Caco-2 (cell line): ENCODE measurements at regions of chr5 and their contacts with region 1.

Region 1: DNA sequence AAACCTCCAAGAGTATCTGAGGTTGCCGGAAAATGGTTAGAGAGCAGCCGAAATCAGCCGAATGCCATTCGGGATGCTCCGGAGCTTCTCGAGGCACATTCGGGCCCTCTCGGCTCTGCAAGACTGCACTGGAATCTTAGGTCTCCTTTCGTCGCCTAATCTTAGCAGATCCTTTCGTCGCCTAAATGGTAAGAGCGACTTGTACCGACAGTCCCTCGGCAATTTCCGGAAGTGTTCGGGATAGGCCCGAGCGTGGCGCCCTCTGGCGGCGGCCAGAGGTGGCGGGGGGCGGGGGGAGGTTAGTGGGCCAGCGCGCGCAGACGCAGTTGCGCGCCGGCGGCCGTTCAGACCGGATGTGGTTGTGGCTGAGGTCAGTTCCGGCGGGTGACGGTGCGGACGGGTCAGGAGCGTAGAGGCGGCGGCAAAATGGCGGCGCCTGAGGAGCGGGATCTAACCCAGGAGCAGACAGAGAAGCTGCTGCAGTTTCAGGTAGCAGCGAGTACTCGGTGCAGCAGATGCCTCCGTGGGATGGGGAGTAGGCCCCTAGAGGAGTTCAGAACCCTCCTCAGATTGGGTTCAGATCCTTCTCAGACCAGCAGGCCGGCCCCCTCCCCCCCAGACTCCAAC is at the start of gene FAF2:
- DNase-seq: peak; percentile 97 to 99
- H3K4me3 ChIP-seq: peak within 1 kb of the TSS; percentile 88
- H3K4me3 Mint-ChIP-seq: peak within 1 kb of the TSS; percentile 86
- H3K27ac Mint-ChIP-seq: peak within 1 kb of the TSS; percentile 91
- H3K4me1 ChIP-seq: peaks cover 12% of the 10 kb centered on the region; the same call in 1 of the 2 replicates
- H3K4me1 Mint-ChIP-seq: peaks cover 7% of the 10 kb centered on the region
- H3K27me3 ChIP-seq: no peaks in the 10 kb centered on the region
- H3K27me3 Mint-ChIP-seq: no peaks in the 10 kb centered on the region
- CTCF ChIP-seq: peak; percentile 92 to 93
- total RNA-seq, gene FAF2: 55.5 and 57.9 TPM in 2 replicates

Region 2: GRCh38 chr5:176388444-176389134 is 59.5 kb before region 1 on chr5 and contains the starts of genes HIGD2A and NOP16:
- CTCF ChIA-PET with region 1: interaction called, 3 read pairs
- POLR2A ChIA-PET with region 1: no interaction called
- intact Hi-C with region 1: loop called (anchors 2 kb)
- DNase-seq: peak; percentile 98 to 99
- H3K4me3 ChIP-seq: peak within 1 kb of the TSS; percentile 88
- H3K4me3 Mint-ChIP-seq: peak within 1 kb of the TSS; percentile 87
- H3K27ac Mint-ChIP-seq: peak within 1 kb of the TSS; percentile 98
- H3K4me1 ChIP-seq: peaks cover 4% of the 10 kb centered on the region; the same call in 1 of the 2 replicates
- H3K4me1 Mint-ChIP-seq: no peaks in the 10 kb centered on the region
- H3K27me3 ChIP-seq: no peaks in the 10 kb centered on the region
- H3K27me3 Mint-ChIP-seq: no peaks in the 10 kb centered on the region
- CTCF ChIP-seq: no peak
- total RNA-seq, gene HIGD2A: 110 and 118 TPM in 2 replicates
- total RNA-seq, gene NOP16: 48.0 and 56.4 TPM in 2 replicates

Region 3: GRCh38 chr5:176415952-176416924 is 31.9 kb before region 1 on chr5 and contains the start of gene CLTB:
- CTCF ChIA-PET with region 1: interaction called, 20 read pairs
- POLR2A ChIA-PET with region 1: interaction called, 23 read pairs
- intact Hi-C with region 1: loop called (anchors 1 kb)
- DNase-seq: peak; percentile 85 to 89
- H3K4me3 ChIP-seq: peak within 1 kb of the TSS; percentile 92
- H3K4me3 Mint-ChIP-seq: peak within 1 kb of the TSS; percentile 77
- H3K27ac Mint-ChIP-seq: peak within 1 kb of the TSS; percentile 85
- H3K4me1 ChIP-seq: peaks cover 23% of the 10 kb centered on the region
- H3K4me1 Mint-ChIP-seq: peaks cover 17% of the 10 kb centered on the region
- H3K27me3 ChIP-seq: no peaks in the 10 kb centered on the region
- H3K27me3 Mint-ChIP-seq: no peaks in the 10 kb centered on the region
- CTCF ChIP-seq: peak; percentile 38 to 72
- total RNA-seq, gene CLTB: 78.9 and 80.0 TPM in 2 replicates

Region 4: GRCh38 chr5:176424181-176424580 is 23.9 kb before region 1 on chr5:
- CTCF ChIA-PET with region 1: interaction called, 12 read pairs
- POLR2A ChIA-PET with region 1: interaction called, 6 read pairs
- intact Hi-C with region 1: no loop called
- DNase-seq: no peak
- H3K4me3 ChIP-seq: no peak overlapping the region
- H3K4me3 Mint-ChIP-seq: no peak overlapping the region
- H3K27ac Mint-ChIP-seq: peak overlapping the region; percentile 45
- H3K4me1 ChIP-seq: peaks cover 21% of the 10 kb centered on the region
- H3K4me1 Mint-ChIP-seq: peaks cover 7% of the 10 kb centered on the region
- H3K27me3 ChIP-seq: no peaks in the 10 kb centered on the region
- H3K27me3 Mint-ChIP-seq: no peaks in the 10 kb centered on the region
- CTCF ChIP-seq: no peak

Region 5: GRCh38 chr5:176466245-176466871 is 18.3 kb after region 1 on chr5:
- CTCF ChIA-PET with region 1: interaction called, 16 read pairs
- POLR2A ChIA-PET with region 1: interaction called, 6 read pairs
- intact Hi-C with region 1: no loop called
- DNase-seq: peak in 1 of 2 experiments; percentile 52
- H3K4me3 ChIP-seq: no peak overlapping the region
- H3K4me3 Mint-ChIP-seq: no peak overlapping the region
- H3K27ac Mint-ChIP-seq: peak overlapping the region; percentile 18
- H3K4me1 ChIP-seq: peaks cover 13% of the 10 kb centered on the region
- H3K4me1 Mint-ChIP-seq: peaks cover 11% of the 10 kb centered on the region
- H3K27me3 ChIP-seq: no peaks in the 10 kb centered on the region
- H3K27me3 Mint-ChIP-seq: no peaks in the 10 kb centered on the region
- CTCF ChIP-seq: no peak

Region 6: GRCh38 chr5:176537608-176538504 is 89.8 kb after region 1 on chr5:
- CTCF ChIA-PET with region 1: interaction called, 24 read pairs
- POLR2A ChIA-PET with region 1: interaction called, 17 read pairs
- intact Hi-C with region 1: loop called (anchors 2 kb)
- DNase-seq: peak; percentile 97 to 100
- H3K4me3 ChIP-seq: peak overlapping the region; percentile 90
- H3K4me3 Mint-ChIP-seq: peak overlapping the region; percentile 96
- H3K27ac Mint-ChIP-seq: peak overlapping the region; percentile 96
- H3K4me1 ChIP-seq: peaks cover 14% of the 10 kb centered on the region
- H3K4me1 Mint-ChIP-seq: peaks cover 29% of the 10 kb centered on the region
- H3K27me3 ChIP-seq: no peaks in the 10 kb centered on the region
- H3K27me3 Mint-ChIP-seq: no peaks in the 10 kb centered on the region
- CTCF ChIP-seq: no peak

Region 7: DNA sequence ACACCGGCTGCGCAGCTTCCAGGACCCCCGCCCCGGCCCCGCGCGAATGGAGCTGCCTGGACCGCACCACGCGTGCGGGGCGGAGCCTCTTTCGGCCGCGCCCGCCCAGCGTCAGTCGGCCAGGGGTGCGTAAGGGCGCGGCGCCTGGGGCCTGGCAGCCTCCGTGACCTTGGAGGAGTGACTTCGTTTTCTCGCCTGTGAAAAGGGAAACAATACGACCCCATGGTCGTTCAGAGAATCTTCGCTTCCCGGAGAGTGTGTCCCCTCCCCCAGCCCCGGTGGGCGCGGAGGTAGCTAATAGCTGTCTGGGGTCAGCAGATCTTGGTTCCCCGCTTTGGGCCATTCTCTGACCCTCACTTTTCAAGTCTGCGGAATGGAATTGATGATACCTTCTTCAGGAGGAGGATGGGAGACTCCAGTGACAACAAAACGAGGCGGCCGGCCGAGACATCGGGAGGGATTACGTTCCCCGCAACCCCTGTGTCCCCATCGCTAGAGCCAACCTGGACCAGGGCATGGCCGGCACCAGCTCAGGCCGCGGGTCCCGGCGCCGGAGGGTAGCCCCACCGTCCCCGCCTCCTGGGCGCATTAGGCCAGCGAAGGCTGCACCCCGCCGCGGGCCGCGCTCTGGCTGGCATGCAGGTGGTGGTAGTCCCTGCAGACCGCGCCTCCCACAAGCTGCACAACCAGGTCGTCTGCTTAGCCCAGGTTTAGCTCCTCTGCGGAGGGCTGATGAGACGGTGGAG is 95.5 kb after region 1 on chr5:
- CTCF ChIA-PET with region 1: interaction called, 24 read pairs
- POLR2A ChIA-PET with region 1: interaction called, 5 read pairs
- intact Hi-C with region 1: no loop called
- DNase-seq: peak; percentile 81 to 82
- H3K4me3 ChIP-seq: peak overlapping the region; percentile 71
- H3K4me3 Mint-ChIP-seq: peak overlapping the region; percentile 85
- H3K27ac Mint-ChIP-seq: peak overlapping the region; percentile 86
- H3K4me1 ChIP-seq: peaks cover 33% of the 10 kb centered on the region
- H3K4me1 Mint-ChIP-seq: peaks cover 29% of the 10 kb centered on the region
- H3K27me3 ChIP-seq: no peaks in the 10 kb centered on the region
- H3K27me3 Mint-ChIP-seq: no peaks in the 10 kb centered on the region
- CTCF ChIP-seq: no peak